ENCODE measurements at regions of chr12 and their contacts with region 1.

Region 1: DNA sequence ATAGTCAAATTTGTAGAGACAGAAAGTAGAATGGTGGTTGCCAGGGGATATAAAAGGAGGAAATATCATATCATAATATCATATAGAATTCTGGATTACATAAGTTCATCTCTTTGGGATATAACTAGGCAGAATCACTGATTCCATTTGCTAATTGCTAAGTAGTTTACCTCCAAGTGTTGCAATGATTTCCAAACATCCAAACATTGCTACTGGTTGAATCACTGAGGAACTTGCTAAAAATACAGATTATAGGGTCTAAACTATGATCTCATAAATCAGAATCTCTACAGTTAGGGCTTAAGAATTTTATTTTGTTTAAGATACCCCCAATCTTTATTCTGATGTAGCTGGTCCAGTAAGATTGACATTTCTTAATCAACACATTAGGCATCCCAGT is 16.1 kb upstream of the TAS2R42 start:
- DNase-seq: no peak
- ATAC-seq: no peak
- H3K4me3 ChIP-seq: no peak overlapping the region
- H3K4me3 Mint-ChIP-seq: no peak overlapping the region
- H3K27ac ChIP-seq: no peak overlapping the region
- H3K27ac Mint-ChIP-seq: no peak overlapping the region
- H3K4me1 ChIP-seq: no peaks in the 10 kb centered on the region
- H3K4me1 Mint-ChIP-seq: no peaks in the 10 kb centered on the region
- H3K27me3 ChIP-seq: no peaks in the 10 kb centered on the region
- H3K27me3 Mint-ChIP-seq: no peaks in the 10 kb centered on the region
- CTCF ChIP-seq: no peak

Region 2: DNA sequence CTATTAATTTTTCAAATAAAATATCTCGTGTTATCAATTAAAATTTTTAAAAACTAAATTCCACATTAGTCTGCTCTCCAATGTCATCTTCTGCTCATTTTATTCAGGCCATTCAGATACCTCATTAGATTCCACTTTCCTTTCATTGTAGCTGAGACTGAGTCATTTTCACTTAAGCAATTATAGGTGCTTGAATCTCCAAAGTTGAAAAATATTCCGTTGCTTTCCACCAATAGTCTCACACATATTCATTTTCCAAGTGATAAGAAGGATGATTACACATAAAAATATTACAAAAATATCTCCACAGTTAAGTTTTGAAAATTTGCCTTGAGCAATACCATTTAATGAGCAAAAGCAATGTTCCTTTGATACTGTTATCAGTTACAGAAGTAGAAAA is 443.2 kb before region 1 on chr12:
- CTCF ChIA-PET with region 1: interaction called, 12 read pairs
- POLR2A ChIA-PET with region 1: no interaction called
- intact Hi-C with region 1: no loop called
- DNase-seq: no peak
- ATAC-seq: no peak
- H3K4me3 ChIP-seq: no peak overlapping the region
- H3K4me3 Mint-ChIP-seq: no peak overlapping the region
- H3K27ac ChIP-seq: no peak overlapping the region
- H3K27ac Mint-ChIP-seq: no peak overlapping the region
- H3K4me1 ChIP-seq: no peaks in the 10 kb centered on the region
- H3K4me1 Mint-ChIP-seq: no peaks in the 10 kb centered on the region
- H3K27me3 ChIP-seq: peaks cover 0 to 5% of the 10 kb centered on the region in 2 experiments
- H3K27me3 Mint-ChIP-seq: peaks cover 32% of the 10 kb centered on the region
- CTCF ChIP-seq: no peak

Region 3: DNA sequence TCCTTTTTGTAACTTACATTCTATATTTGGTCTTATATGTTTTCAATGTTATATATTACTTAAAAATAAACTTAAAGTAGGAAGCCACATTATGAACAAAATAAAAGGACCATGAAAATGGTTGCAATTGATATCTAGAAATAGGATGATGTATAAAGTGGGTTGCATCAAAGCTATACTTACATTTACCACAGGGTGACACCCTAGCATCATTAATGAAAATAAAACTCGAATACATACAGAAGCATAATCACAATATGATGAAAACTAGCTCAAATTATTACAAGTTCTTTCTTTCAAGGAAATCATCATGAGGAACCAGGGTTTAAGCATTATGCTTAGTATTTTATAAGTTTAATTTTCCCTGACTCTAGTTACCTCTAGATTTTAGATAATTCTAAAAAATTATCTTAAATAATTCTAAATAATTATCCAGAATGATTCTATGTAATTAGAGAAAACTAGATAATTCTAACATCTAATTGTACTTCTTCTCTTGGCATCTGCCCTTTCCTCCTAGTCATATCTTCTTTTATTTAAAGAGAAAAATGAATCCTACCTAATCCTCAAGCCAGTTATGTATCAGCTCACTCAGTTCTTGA is 431.6 kb before region 1 on chr12:
- CTCF ChIA-PET with region 1: interaction called, 35 read pairs
- POLR2A ChIA-PET with region 1: no interaction called
- intact Hi-C with region 1: loop called in 1 of 2 experiments (anchors 1 kb)
- DNase-seq: peak in 2 of 9 experiments; percentile 59 to 72
- ATAC-seq: peak; percentile 81
- H3K4me3 ChIP-seq: no peak overlapping the region
- H3K4me3 Mint-ChIP-seq: no peak overlapping the region
- H3K27ac ChIP-seq: no peak overlapping the region
- H3K27ac Mint-ChIP-seq: no peak overlapping the region
- H3K4me1 ChIP-seq: no peaks in the 10 kb centered on the region
- H3K4me1 Mint-ChIP-seq: no peaks in the 10 kb centered on the region
- H3K27me3 ChIP-seq: peaks cover 2 to 5% of the 10 kb centered on the region in 2 experiments
- H3K27me3 Mint-ChIP-seq: peaks cover 39% of the 10 kb centered on the region
- CTCF ChIP-seq: peak; percentile 81

Region 4: DNA sequence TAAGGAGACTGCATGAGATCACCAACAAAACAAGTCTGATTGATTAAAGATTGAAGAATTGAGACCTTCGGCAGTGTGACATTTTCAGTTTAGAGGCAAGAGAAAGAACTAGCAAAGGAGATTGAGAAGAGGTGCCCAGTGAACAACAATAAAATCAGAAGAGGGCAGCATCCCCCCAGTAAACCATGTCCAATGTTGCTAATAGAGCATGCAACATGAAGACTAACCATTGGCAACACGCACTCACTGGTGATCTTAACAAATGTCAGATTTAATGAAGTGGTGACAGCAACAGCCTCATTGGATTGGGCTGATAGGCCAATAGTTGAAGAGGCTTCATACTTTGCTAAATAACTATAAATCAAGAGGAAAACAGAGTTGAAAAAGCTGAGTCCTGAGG is 243.0 kb before region 1 on chr12:
- CTCF ChIA-PET with region 1: interaction called, 4 read pairs
- POLR2A ChIA-PET with region 1: no interaction called
- intact Hi-C with region 1: loop called in 1 of 2 experiments (anchors 5 kb)
- DNase-seq: peak in 2 of 9 experiments; percentile 27 to 38
- ATAC-seq: peak; percentile 28
- H3K4me3 ChIP-seq: no peak overlapping the region
- H3K4me3 Mint-ChIP-seq: no peak overlapping the region
- H3K27ac ChIP-seq: no peak overlapping the region
- H3K27ac Mint-ChIP-seq: no peak overlapping the region
- H3K4me1 ChIP-seq: peaks cover 15% of the 10 kb centered on the region
- H3K4me1 Mint-ChIP-seq: peaks cover 25% of the 10 kb centered on the region
- H3K27me3 ChIP-seq: no peaks in the 10 kb centered on the region
- H3K27me3 Mint-ChIP-seq: no peaks in the 10 kb centered on the region
- CTCF ChIP-seq: no peak

Region 5: DNA sequence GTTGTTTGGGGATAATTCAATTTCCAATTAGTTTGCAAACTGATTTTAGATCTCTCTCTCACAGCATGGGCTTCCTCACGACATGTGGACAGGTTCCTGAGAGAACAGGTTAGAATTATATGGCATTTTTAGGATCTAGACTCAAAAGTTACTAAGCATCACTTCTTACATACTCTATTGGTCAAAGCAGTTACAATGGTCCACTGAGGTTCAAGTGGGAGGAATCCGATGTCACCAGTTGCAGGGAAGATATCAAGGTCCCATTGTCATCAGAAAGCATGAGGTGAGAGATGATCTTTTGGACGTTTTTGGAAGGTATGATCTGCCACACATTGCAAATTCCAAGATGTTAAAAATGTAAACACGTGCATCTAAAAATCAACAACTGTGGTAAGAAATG is 49.3 kb after region 1 on chr12:
- CTCF ChIA-PET with region 1: no interaction called
- POLR2A ChIA-PET with region 1: no interaction called
- intact Hi-C with region 1: no loop called
- DNase-seq: no peak
- ATAC-seq: no peak
- H3K4me3 ChIP-seq: no peak overlapping the region
- H3K4me3 Mint-ChIP-seq: no peak overlapping the region
- H3K27ac ChIP-seq: no peak overlapping the region
- H3K27ac Mint-ChIP-seq: no peak overlapping the region
- H3K4me1 ChIP-seq: no peaks in the 10 kb centered on the region
- H3K4me1 Mint-ChIP-seq: no peaks in the 10 kb centered on the region
- H3K27me3 ChIP-seq: no peaks in the 10 kb centered on the region
- H3K27me3 Mint-ChIP-seq: no peaks in the 10 kb centered on the region
- CTCF ChIP-seq: no peak